ENCODE measurements at regions of chr9 and their contacts with region 1.

Region 1: GRCh38 chr9:109012876-109013678 is at the start of gene CTNNAL1:
- DNase-seq: peak; percentile 94
- H3K4me3 ChIP-seq: peak within 1 kb of the TSS; percentile 94
- H3K27ac ChIP-seq: peak within 1 kb of the TSS; percentile 84
- H3K4me1 ChIP-seq: peaks cover 33% of the 10 kb centered on the region
- H3K27me3 ChIP-seq: no peaks in the 10 kb centered on the region
- CTCF ChIP-seq: no peak
- total RNA-seq, gene CTNNAL1: 72.0 and 72.5 TPM in 2 replicates

Region 2: DNA sequence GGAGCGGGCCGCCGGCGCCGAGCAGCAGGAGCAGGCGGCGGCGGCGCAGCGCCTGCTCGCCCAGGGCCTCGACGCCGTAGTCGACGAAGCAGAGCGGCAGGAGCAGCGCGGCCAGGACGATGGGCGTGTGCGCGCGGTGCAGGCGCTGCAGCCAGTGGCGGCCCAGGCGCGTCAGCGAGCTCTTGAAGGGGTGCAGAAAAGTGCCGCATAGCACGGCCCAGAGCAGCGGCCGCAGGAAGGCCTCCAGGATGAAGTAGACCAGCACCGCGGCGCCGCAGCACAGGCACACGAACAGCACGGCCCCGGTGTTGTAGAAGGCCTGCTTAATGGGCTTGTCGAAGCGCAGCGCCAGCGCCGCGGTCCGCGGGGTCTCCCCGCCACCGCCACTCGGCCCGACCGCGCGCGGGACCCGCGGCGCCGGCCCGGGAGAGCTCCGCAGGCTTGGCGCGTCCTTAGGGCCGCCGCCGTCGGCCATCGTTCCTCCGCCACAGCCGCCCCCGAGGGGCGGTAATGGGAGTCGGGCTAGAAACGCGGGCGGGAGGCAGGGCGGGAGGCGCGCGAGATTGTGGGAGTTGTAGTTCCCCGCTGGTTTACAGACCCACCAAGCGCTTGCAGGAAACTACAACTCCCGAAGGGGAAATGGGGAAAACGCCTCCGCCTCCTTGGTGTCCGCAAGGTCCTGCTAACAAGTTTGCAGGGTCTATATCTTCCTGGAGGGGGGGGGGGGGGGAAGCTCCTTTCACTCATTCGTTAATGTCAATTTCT is 106.5 kb after region 1 on chr9 and contains the start of gene TMEM245:
- CTCF ChIA-PET with region 1: no interaction called
- POLR2A ChIA-PET with region 1: no interaction called
- intact Hi-C with region 1: loop called (anchors 5 kb)
- DNase-seq: peak; percentile 100
- H3K4me3 ChIP-seq: peak within 1 kb of the TSS; percentile 99
- H3K27ac ChIP-seq: peak within 1 kb of the TSS; percentile 96
- H3K4me1 ChIP-seq: peaks cover 12% of the 10 kb centered on the region
- H3K27me3 ChIP-seq: no peaks in the 10 kb centered on the region
- CTCF ChIP-seq: no peak
- total RNA-seq, gene TMEM245: 57.1 and 59.8 TPM in 2 replicates